Heart left ventricle (tissue), 16 donors: ENCODE measurements at regions of chr4 and their contacts with region 1.

Region 1: GRCh38 chr4:128809477-128810330 is at the start of gene JADE1:
- DNase-seq: peak; percentile 91 to 94 (median 93)
- ATAC-seq: peak; percentile 65 to 83 (median 74)
- H3K4me3 ChIP-seq: peak within 1 kb of the TSS; percentile 64 to 94 (median 88)
- H3K27ac ChIP-seq: peak within 1 kb of the TSS; percentile 90 to 97 (median 96)
- H3K4me1 ChIP-seq: peaks cover 0 to 23% (median 7%) of the 10 kb centered on the region in 12 donors
- H3K27me3 ChIP-seq: no peaks in the 10 kb centered on the region
- CTCF ChIP-seq: peak; percentile 46 to 71 (median 57)
- POLR2A ChIP-seq: peak in 1 of 2 donors; percentile 63
- total RNA-seq, gene JADE1: 18.1 to 31.9 (median 22.7) TPM

Region 2: DNA sequence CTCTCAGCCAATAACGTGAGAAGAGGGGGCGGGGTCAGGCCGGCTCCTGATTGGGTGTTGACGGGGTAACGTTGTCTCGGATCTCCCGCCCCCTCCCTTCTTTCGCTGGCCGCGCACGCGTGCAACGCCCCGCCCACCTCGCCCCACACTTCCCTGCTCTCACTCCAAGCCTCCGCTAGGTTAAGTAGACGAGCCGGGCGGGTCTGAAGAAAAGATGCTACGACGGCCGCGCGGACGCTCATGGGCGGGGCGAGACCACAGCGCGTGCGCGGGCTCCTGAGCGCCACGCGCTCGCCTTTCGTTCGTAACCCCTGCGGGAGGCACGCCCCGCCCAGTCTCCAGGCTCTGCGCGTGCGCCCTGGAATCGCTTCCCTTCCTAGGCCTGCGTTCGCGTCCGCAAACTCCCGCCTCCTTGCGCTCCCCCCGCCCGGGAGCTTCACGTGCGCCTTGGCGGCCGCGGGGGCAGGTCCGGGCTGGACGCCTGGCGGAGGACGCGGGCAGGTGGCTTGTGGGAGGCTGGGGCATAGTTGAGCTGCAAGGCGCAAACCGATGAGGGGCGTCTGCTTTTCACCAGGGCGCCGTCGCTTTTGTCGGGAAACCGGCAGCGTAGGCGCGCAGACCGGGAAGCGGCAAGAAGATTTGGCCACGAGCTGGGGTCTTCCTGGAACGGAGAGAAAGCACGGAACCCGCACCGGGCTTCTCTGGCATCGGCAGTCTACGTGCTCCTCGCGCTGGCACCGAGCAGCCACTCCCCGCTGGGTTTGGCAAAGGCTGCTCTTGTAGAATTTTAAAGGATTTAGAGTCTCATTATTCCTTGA is 521.6 kb before region 1 on chr4:
- intact Hi-C with region 1: loop called in 5 of 10 experiments (anchors 5 to 10 kb)
- DNase-seq: peak; percentile 99 to 100 (median 100)
- ATAC-seq: peak; percentile 93 to 96 (median 96)
- H3K4me3 ChIP-seq: peak overlapping the region; percentile 46 to 90 (median 77)
- H3K27ac ChIP-seq: peak overlapping the region; percentile 77 to 98 (median 94)
- H3K4me1 ChIP-seq: peaks cover 0 to 42% (median 27%) of the 10 kb centered on the region in 12 donors
- H3K27me3 ChIP-seq: no peaks in the 10 kb centered on the region
- CTCF ChIP-seq: peak in 8 of 12 donors; percentile 3 to 35 (median 12)
- POLR2A ChIP-seq: peak in 1 of 2 donors; percentile 81

Region 3: GRCh38 chr4:128454281-128455075 is 355.2 kb before region 1 on chr4:
- intact Hi-C with region 1: loop called in 8 of 10 experiments (anchors 1 to 10 kb)
- DNase-seq: peak; percentile 76 to 84 (median 81)
- ATAC-seq: peak; percentile 72 to 93 (median 90)
- H3K4me3 ChIP-seq: peak overlapping the region in 2 of 12 donors; percentile 1
- H3K27ac ChIP-seq: peak overlapping the region in 1 of 12 donors; percentile 6
- H3K4me1 ChIP-seq: peaks cover 0 to 19% (median 10%) of the 10 kb centered on the region in 12 donors
- H3K27me3 ChIP-seq: no peaks in the 10 kb centered on the region
- CTCF ChIP-seq: peak; percentile 66 to 87 (median 81)
- POLR2A ChIP-seq: no peak

Region 4: DNA sequence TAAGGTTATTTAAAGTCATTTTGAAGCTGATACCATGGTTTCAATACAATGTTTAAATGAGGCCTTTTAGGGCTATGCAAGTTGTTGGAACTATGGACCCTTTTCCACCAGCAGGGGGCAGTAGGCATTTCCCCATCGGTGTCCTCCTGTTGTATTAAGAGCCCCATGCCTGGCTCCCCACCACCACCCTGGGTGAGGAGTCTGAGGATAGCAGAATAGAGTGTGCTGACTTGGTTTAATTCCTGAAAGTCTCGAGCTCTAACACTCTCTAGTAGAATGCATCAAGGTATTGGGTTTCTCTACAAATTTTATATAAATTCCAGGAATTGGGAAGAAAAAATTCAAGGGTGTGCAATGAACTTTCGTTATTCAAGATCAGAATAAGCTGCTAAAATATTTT is 235.0 kb before region 1 on chr4:
- intact Hi-C with region 1: loop called in 6 of 10 experiments (anchors 5 kb)
- DNase-seq: peak in 4 of 5 donors; percentile 33 to 63 (median 52)
- ATAC-seq: peak; percentile 25 to 62 (median 60)
- H3K4me3 ChIP-seq: no peak overlapping the region
- H3K27ac ChIP-seq: no peak overlapping the region
- H3K4me1 ChIP-seq: peaks cover 3 to 40% (median 17%) of the 10 kb centered on the region in 12 donors
- H3K27me3 ChIP-seq: no peaks in the 10 kb centered on the region
- CTCF ChIP-seq: peak in 11 of 12 donors; percentile 26 to 66 (median 56)
- POLR2A ChIP-seq: no peak

Region 5: DNA sequence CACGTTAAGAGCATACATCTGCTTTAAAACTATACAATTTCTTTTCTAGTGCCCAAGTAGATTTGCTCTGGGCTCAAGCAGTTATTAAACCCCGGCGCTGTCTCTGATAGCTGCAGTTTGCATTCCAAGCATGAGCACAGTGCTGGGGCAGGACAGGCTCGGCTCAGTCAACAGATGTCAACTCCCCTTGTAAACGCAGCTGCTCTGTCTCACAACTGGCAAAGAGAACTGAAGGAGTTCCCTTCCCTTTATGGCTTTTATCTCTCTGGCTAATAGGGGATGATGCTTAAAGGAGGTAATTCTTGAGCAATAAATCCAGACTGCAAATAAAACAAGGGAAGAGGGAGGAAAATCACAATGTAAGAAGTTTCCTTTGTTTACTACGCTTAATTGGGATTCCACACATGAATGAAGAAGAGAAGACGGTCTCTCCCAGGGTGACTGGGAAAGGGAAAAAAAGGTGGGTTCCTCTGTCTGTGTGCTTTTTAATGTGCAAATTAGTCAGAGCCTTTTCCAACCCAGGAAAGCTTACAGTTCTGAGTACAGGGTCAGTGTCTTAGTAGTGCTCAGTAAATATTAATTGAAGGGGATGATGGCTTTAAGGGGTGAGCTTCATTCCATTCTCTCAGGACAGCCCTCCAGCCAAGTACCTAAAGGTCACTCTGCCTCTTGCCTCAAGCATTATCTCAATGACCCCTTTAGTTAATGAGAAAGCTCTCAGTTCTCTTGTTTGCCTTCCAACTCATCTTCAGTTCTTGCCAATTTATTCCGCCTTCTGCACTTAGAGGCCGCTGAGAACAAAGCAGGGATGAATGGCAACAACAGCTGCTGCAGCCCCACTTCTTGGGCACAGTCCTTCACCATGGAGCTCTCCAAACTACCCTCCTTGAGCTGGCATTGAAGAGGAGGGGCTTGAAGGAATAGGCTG is 155.9 kb before region 1 on chr4:
- intact Hi-C with region 1: loop called in 1 of 10 experiments (anchors 5 kb)
- DNase-seq: peak in 4 of 5 donors; percentile 33 to 74 (median 58)
- ATAC-seq: peak; percentile 83 to 96 (median 94)
- H3K4me3 ChIP-seq: peak overlapping the region in 2 of 12 donors; percentile 18 to 23
- H3K27ac ChIP-seq: peak overlapping the region in 11 of 12 donors; percentile 27 to 79 (median 58)
- H3K4me1 ChIP-seq: peaks cover 0 to 39% (median 10%) of the 10 kb centered on the region in 12 donors
- H3K27me3 ChIP-seq: no peaks in the 10 kb centered on the region
- CTCF ChIP-seq: no peak
- POLR2A ChIP-seq: peak in 1 of 2 donors; percentile 18

Region 6: DNA sequence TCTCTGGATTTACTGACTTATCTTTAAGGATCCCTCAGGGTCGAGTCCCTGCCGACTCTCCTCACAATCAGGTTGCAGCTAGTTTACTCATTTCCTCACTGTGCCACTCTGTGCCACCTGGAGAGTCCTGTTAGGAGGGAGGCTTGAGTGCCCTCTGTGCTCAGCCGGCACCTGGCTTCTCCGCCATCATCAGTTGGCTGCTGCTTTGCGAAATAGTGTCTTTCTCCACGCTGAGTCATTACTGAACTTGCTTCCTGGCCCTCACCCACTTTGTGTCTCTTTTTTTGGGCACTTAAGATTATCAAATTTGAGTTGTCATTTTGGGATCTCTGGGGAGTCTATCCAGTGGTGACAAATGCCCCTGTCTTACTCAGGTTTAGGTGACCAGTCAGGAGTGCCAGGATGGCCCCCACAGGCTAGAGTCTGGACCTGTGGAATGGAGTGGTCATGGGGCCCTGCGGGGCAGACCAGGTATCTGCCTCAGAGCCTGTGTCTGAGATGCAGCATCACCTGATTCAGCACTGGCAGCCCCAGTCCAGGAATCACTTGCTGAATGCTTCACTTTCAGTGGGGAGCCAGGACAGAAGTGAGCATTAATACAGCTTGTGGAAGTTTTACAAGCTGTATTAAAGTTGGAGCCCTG is 37.5 kb after region 1 on chr4:
- intact Hi-C with region 1: loop called in 2 of 10 experiments (anchors 1 to 5 kb)
- DNase-seq: no peak
- ATAC-seq: no peak
- H3K4me3 ChIP-seq: no peak overlapping the region
- H3K27ac ChIP-seq: peak overlapping the region in 3 of 12 donors; percentile 15 to 70 (median 35)
- H3K4me1 ChIP-seq: peaks cover 0 to 54% (median 30%) of the 10 kb centered on the region in 12 donors
- H3K27me3 ChIP-seq: no peaks in the 10 kb centered on the region
- CTCF ChIP-seq: no peak
- POLR2A ChIP-seq: no peak

Region 7: DNA sequence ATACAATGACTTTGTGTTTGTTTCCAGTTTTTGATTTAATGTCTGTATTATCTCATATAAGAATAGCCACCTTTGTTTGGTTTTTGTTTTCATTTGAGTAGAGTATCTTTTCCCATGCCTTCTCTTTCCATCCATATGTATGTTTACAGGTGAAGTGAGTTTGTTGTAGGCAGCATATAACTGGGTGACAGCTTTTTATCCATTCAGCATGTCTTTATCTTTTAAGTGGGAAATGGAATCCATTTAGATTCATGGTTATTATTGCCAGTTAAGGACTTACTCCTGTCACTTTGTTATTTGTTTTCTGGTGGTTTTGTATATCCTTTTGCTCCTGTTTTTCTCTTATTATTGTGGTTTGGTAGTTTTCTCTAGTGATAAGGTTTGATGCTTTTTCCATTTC is 249.3 kb after region 1 on chr4:
- intact Hi-C with region 1: no loop called
- DNase-seq: no peak
- ATAC-seq: no peak
- H3K4me3 ChIP-seq: no peak overlapping the region
- H3K27ac ChIP-seq: no peak overlapping the region
- H3K4me1 ChIP-seq: no peaks in the 10 kb centered on the region
- H3K27me3 ChIP-seq: no peaks in the 10 kb centered on the region
- CTCF ChIP-seq: no peak
- POLR2A ChIP-seq: no peak

Region 8: DNA sequence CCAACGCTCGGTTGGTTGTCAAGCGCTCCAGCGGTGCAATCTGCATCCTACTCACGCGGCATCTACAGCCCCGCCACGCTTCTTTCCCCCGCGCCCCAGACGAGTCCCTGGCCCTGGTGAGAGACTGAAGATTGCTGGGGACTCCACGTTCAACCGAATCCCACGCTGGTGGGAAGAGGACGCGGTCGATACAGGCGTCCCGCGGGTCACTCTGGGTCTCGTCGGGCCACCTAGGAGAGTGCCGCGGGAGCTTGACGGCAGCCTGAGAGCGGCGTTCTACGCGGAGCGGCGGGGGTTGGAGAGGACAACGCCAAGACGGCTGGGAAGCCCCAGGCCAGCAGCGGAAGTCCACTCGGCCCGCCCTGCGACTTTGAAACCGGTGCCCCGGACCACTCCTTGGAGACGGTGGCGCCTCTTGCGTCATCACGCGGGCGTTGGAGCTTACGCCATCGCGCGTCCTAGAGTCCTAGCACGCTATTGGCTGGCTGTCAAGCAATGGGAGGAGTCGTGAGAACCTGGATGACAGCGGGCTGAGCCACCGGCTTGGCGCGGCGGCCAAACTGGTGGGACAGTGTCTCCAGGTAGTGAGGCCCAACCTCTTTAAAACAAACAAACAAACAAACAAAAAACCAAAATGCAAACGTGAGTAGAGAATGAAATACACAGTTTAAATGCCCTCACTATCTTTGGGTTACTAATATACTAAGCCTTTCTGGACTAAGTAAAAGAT is 283.7 kb after region 1 on chr4 and contains the start of gene SCLT1:
- intact Hi-C with region 1: loop called in 2 of 10 experiments (anchors 5 to 10 kb)
- DNase-seq: peak; percentile 99 to 100 (median 99)
- ATAC-seq: peak; percentile 99
- H3K4me3 ChIP-seq: peak within 1 kb of the TSS; percentile 42 to 92 (median 78)
- H3K27ac ChIP-seq: peak within 1 kb of the TSS; percentile 81 to 98 (median 94)
- H3K4me1 ChIP-seq: peaks cover 0 to 59% (median 23%) of the 10 kb centered on the region in 12 donors
- H3K27me3 ChIP-seq: no peaks in the 10 kb centered on the region
- CTCF ChIP-seq: peak in 1 of 12 donors; percentile 12
- POLR2A ChIP-seq: peak in 1 of 2 donors; percentile 91
- total RNA-seq, gene SCLT1: 5.3 to 13.7 (median 10.8) TPM